Transverse colon (tissue), 4 donors: ENCODE measurements at regions of chr13 and their contacts with region 1.

Region 1: GRCh38 chr13:78105656-78106055 is 187.0 kb upstream of the EDNRB start:
- DNase-seq: no peak
- H3K4me3 ChIP-seq: no peak overlapping the region
- H3K27ac ChIP-seq: no peak overlapping the region
- H3K4me1 ChIP-seq: no peaks in the 10 kb centered on the region
- H3K27me3 ChIP-seq: no peaks in the 10 kb centered on the region
- CTCF ChIP-seq: no peak
- EP300 ChIP-seq: no peak
- POLR2A ChIP-seq: no peak

Region 2: DNA sequence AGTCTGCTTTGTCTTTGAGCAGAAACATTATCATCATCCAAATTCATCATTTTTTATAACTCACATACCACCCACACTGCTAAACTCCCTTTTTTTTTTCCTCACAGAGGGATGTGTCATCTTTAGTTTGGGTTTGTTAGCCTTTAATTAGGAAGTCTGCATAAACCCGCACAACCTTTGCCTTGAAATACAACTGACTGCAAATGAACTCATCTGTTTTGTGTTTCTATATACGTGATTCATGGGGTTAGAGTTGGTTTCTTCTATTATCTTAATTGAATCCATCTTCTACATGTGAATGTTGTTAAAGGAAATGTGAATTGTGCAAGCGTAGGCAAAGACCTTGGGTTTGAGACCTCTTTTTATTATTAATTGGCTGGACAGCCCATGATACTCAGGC is 305.4 kb before region 1 on chr13:
- in situ Hi-C with region 1: loop called in 2 of 4 experiments (anchors 5 to 10 kb)
- intact Hi-C with region 1: no loop called
- DNase-seq: no peak
- H3K4me3 ChIP-seq: no peak overlapping the region
- H3K27ac ChIP-seq: no peak overlapping the region
- H3K4me1 ChIP-seq: no peaks in the 10 kb centered on the region
- H3K27me3 ChIP-seq: no peaks in the 10 kb centered on the region
- CTCF ChIP-seq: no peak
- EP300 ChIP-seq: no peak
- POLR2A ChIP-seq: no peak

Region 3: DNA sequence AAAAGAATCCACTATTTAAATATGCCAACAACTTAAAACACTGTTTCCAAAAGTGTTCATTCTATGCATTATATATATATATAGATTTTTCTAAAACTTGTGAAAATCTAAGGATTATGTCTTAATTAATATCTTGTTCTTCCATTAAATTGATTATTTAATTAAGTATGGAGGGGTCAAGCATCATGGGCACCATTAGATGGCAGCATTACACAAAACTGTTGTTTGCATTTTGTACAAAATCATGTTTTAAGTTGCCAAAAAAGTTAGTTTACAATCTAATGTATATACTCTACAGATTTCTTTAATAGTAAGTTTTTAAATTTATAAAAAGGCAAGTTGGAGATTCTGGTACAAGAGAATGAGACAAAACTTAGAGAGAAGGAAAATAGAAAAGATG is 26.2 kb after region 1 on chr13:
- in situ Hi-C with region 1: no loop called
- intact Hi-C with region 1: no loop called
- DNase-seq: no peak
- H3K4me3 ChIP-seq: no peak overlapping the region
- H3K27ac ChIP-seq: no peak overlapping the region
- H3K4me1 ChIP-seq: no peaks in the 10 kb centered on the region
- H3K27me3 ChIP-seq: peaks cover 5% of the 10 kb centered on the region
- CTCF ChIP-seq: no peak
- EP300 ChIP-seq: no peak
- POLR2A ChIP-seq: no peak

Region 4: DNA sequence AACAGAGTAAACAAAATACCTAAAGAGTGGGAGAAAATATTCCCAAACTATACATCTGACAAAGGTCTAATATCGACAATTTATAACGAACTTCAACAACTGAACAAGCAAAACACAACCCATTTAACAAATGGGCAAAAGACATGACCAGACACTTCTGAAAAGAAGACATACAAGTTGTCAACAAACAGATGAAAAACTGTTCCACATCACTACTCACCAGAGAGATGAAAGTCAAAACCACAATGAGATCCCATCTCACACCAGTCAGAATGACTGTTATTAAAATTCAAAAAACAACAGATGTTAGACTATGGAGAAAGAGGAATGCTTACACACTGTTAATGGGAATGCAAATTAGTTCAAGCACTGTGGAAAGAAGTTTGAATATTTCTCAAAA is 46.8 kb after region 1 on chr13:
- in situ Hi-C with region 1: no loop called
- intact Hi-C with region 1: no loop called
- DNase-seq: no peak
- H3K4me3 ChIP-seq: no peak overlapping the region
- H3K27ac ChIP-seq: no peak overlapping the region
- H3K4me1 ChIP-seq: no peaks in the 10 kb centered on the region
- H3K27me3 ChIP-seq: no peaks in the 10 kb centered on the region
- CTCF ChIP-seq: no peak
- EP300 ChIP-seq: no peak
- POLR2A ChIP-seq: no peak

Region 5: DNA sequence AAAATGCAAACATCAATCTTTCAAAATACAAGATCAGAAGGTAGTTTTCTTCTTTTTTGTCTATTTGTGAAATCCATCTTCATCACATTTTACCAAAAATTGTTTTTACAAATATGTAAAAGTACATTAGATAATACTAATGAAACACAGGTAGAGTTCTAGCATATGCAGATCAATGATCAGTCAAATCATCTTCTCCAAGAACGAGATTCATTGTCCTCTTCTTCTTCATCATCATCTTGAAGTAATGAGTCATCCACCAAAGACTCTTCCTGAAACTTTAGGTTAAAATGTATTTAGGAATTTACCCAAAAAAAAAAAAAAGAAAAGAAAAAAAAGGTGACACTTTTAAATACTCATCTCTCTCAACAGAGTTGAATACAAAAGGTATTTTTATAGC is 1214.8 kb after region 1 on chr13:
- in situ Hi-C with region 1: no loop called
- intact Hi-C with region 1: no loop called
- DNase-seq: no peak
- H3K4me3 ChIP-seq: no peak overlapping the region
- H3K27ac ChIP-seq: no peak overlapping the region
- H3K4me1 ChIP-seq: no peaks in the 10 kb centered on the region
- H3K27me3 ChIP-seq: no peaks in the 10 kb centered on the region
- CTCF ChIP-seq: no peak
- EP300 ChIP-seq: no peak
- POLR2A ChIP-seq: no peak